GM12878 (cell line): ENCODE measurements at regions of chr12 and their contacts with region 1.

Region 1: GRCh38 chr12:118404876-118405521 is 28.6 kb downstream of the SUDS3 start:
- DNase-seq: peak; percentile 4
- ATAC-seq: peak; percentile 86
- H3K4me3 ChIP-seq: no peak overlapping the region
- H3K27ac ChIP-seq: no peak overlapping the region
- H3K4me1 ChIP-seq: no peaks in the 10 kb centered on the region
- H3K27me3 ChIP-seq: no peaks in the 10 kb centered on the region
- CTCF ChIP-seq: peak; percentile 68 to 76 (median 73)
- EP300 ChIP-seq: no peak
- POLR2A ChIP-seq: no peak
- RAD21 ChIP-seq: peak; percentile 80

Region 2: GRCh38 chr12:118418385-118419057 is 13.5 kb after region 1 on chr12:
- CTCF ChIA-PET with region 1: interaction called, 11 read pairs
- POLR2A ChIA-PET with region 1: no interaction called
- RAD21 ChIA-PET with region 1: no interaction called
- SMC1A ChIA-PET with region 1: no interaction called
- in situ Hi-C with region 1: no loop called
- intact Hi-C with region 1: no loop called
- DNase-seq: no peak
- ATAC-seq: no peak
- H3K4me3 ChIP-seq: no peak overlapping the region
- H3K27ac ChIP-seq: no peak overlapping the region
- H3K4me1 ChIP-seq: no peaks in the 10 kb centered on the region
- H3K27me3 ChIP-seq: no peaks in the 10 kb centered on the region
- CTCF ChIP-seq: no peak
- EP300 ChIP-seq: no peak
- POLR2A ChIP-seq: no peak
- RAD21 ChIP-seq: no peak

Region 3: GRCh38 chr12:118714051-118714460 is 309.1 kb after region 1 on chr12:
- CTCF ChIA-PET with region 1: no interaction called
- POLR2A ChIA-PET with region 1: no interaction called
- RAD21 ChIA-PET with region 1: no interaction called
- SMC1A ChIA-PET with region 1: no interaction called
- in situ Hi-C with region 1: no loop called
- intact Hi-C with region 1: loop called (anchors 10 kb)
- DNase-seq: peak; percentile 11
- ATAC-seq: peak; percentile 77
- H3K4me3 ChIP-seq: no peak overlapping the region
- H3K27ac ChIP-seq: no peak overlapping the region
- H3K4me1 ChIP-seq: no peaks in the 10 kb centered on the region
- H3K27me3 ChIP-seq: no peaks in the 10 kb centered on the region
- CTCF ChIP-seq: peak; percentile 55 to 76 (median 61)
- EP300 ChIP-seq: no peak
- POLR2A ChIP-seq: no peak
- RAD21 ChIP-seq: peak; percentile 59

Region 4: GRCh38 chr12:118840399-118840798 is 435.4 kb after region 1 on chr12:
- CTCF ChIA-PET with region 1: no interaction called
- POLR2A ChIA-PET with region 1: no interaction called
- RAD21 ChIA-PET with region 1: no interaction called
- SMC1A ChIA-PET with region 1: no interaction called
- in situ Hi-C with region 1: no loop called
- intact Hi-C with region 1: loop called (anchors 5 kb)
- DNase-seq: no peak
- ATAC-seq: peak; percentile 58; the same call in 2 of the 3 replicates
- H3K4me3 ChIP-seq: no peak overlapping the region
- H3K27ac ChIP-seq: no peak overlapping the region
- H3K4me1 ChIP-seq: no peaks in the 10 kb centered on the region
- H3K27me3 ChIP-seq: no peaks in the 10 kb centered on the region
- CTCF ChIP-seq: peak; percentile 31 to 55 (median 45); a peak in 4 of 6 replicates
- EP300 ChIP-seq: no peak
- POLR2A ChIP-seq: no peak
- RAD21 ChIP-seq: peak; percentile 60

Region 5: GRCh38 chr12:119036878-119037825 is 632.2 kb after region 1 on chr12:
- CTCF ChIA-PET with region 1: interaction called, 5 read pairs
- POLR2A ChIA-PET with region 1: no interaction called
- RAD21 ChIA-PET with region 1: no interaction called
- SMC1A ChIA-PET with region 1: interaction called, 3 read pairs
- in situ Hi-C with region 1: no loop called
- intact Hi-C with region 1: loop called (anchors 5 kb)
- DNase-seq: no peak
- ATAC-seq: 0 out of 3 replicates have a peak, but pooled peaks have one; percentile 42
- H3K4me3 ChIP-seq: no peak overlapping the region
- H3K27ac ChIP-seq: no peak overlapping the region
- H3K4me1 ChIP-seq: no peaks in the 10 kb centered on the region
- H3K27me3 ChIP-seq: no peaks in the 10 kb centered on the region
- CTCF ChIP-seq: peak; percentile 51 to 55 (median 52)
- EP300 ChIP-seq: no peak
- POLR2A ChIP-seq: no peak
- RAD21 ChIP-seq: peak; percentile 41

Region 6: GRCh38 chr12:119412811-119413794 is 1008.1 kb after region 1 on chr12:
- CTCF ChIA-PET with region 1: interaction called, 8 read pairs
- POLR2A ChIA-PET with region 1: no interaction called
- RAD21 ChIA-PET with region 1: interaction called, 4 read pairs
- SMC1A ChIA-PET with region 1: no interaction called
- in situ Hi-C with region 1: loop called (anchors 10 kb)
- intact Hi-C with region 1: loop called (anchors 10 kb)
- DNase-seq: no peak
- ATAC-seq: peak; percentile 67
- H3K4me3 ChIP-seq: no peak overlapping the region
- H3K27ac ChIP-seq: no peak overlapping the region
- H3K4me1 ChIP-seq: no peaks in the 10 kb centered on the region
- H3K27me3 ChIP-seq: no peaks in the 10 kb centered on the region
- CTCF ChIP-seq: peak; percentile 74 to 89 (median 75)
- EP300 ChIP-seq: no peak
- POLR2A ChIP-seq: no peak
- RAD21 ChIP-seq: peak; percentile 73

Region 7: GRCh38 chr12:119544765-119545625 is 1140.0 kb after region 1 on chr12:
- CTCF ChIA-PET with region 1: interaction called, 3 read pairs
- POLR2A ChIA-PET with region 1: no interaction called
- RAD21 ChIA-PET with region 1: no interaction called
- SMC1A ChIA-PET with region 1: no interaction called
- in situ Hi-C with region 1: no loop called
- intact Hi-C with region 1: loop called (anchors 10 kb)
- DNase-seq: peak; percentile 8
- ATAC-seq: peak; percentile 89
- H3K4me3 ChIP-seq: no peak overlapping the region
- H3K27ac ChIP-seq: no peak overlapping the region
- H3K4me1 ChIP-seq: no peaks in the 10 kb centered on the region
- H3K27me3 ChIP-seq: no peaks in the 10 kb centered on the region; a peak in 1 of 4 replicates
- CTCF ChIP-seq: peak; percentile 72 to 89 (median 79)
- EP300 ChIP-seq: no peak
- POLR2A ChIP-seq: no peak
- RAD21 ChIP-seq: peak; percentile 81